MCF 10A (cell line): ENCODE measurements at regions of chr13 and their contacts with region 1.

Region 1: GRCh38 chr13:75687150-75687763 is 51.1 kb downstream of the LMO7 start:
- DNase-seq: peak; percentile 59
- H3K4me3 Mint-ChIP-seq: no peak overlapping the region
- H3K27ac Mint-ChIP-seq: no peak overlapping the region
- H3K4me1 Mint-ChIP-seq: peaks cover 18% of the 10 kb centered on the region
- H3K27me3 Mint-ChIP-seq: no peaks in the 10 kb centered on the region
- CTCF ChIP-seq: peak; percentile 49

Region 2: DNA sequence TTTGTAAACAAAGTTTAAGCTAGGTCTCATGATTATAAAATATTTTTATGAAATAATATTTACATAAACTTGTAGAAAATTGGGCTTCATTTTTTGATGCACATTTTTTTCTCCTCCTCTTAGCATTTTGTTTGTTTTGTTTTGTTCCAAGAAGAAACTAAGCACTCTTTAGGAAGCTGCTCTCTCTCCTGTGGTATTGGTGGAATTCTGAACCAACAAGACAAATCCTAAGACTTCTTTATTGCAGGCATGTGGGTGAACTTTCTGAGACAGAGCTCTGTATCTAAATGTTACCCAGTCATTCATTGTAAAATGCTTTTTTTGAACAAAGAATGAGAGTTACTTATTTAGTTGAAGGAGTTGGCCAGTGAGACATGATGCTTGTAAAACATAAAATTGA is 11.8 kb before region 1 on chr13:
- CTCF ChIA-PET with region 1: interaction called, 63 read pairs
- POLR2A ChIA-PET with region 1: interaction called, 9 read pairs
- intact Hi-C with region 1: no loop called
- DNase-seq: peak; percentile 20
- H3K4me3 Mint-ChIP-seq: peak overlapping the region; percentile 79
- H3K27ac Mint-ChIP-seq: peak overlapping the region; percentile 93
- H3K4me1 Mint-ChIP-seq: peaks cover 8% of the 10 kb centered on the region
- H3K27me3 Mint-ChIP-seq: no peaks in the 10 kb centered on the region
- CTCF ChIP-seq: no peak

Region 3: DNA sequence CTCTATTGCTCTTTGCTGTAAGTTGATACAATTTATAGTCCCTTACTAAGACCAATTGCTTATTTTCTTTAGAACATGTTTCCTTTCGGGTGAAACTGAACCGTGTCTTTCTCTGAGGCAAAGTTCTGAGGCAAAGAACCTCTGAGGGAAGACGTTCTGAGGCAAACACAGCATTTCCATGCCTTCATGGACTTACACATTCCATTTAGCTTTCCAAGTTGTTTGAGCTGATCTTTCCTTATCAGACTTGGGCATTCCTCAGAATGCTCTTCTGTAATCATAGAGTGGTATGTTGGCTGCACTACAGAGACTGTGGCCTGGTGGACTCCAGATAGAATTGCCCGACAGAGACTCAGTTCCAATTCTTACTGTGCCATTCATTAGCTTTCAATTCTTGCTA is 619.9 kb after region 1 on chr13:
- CTCF ChIA-PET with region 1: no interaction called
- POLR2A ChIA-PET with region 1: no interaction called
- intact Hi-C with region 1: no loop called
- DNase-seq: no peak
- H3K4me3 Mint-ChIP-seq: no peak overlapping the region
- H3K27ac Mint-ChIP-seq: no peak overlapping the region
- H3K4me1 Mint-ChIP-seq: no peaks in the 10 kb centered on the region
- H3K27me3 Mint-ChIP-seq: no peaks in the 10 kb centered on the region
- CTCF ChIP-seq: no peak